B cell (primary cell): ENCODE measurements at regions of chr5 and their contacts with region 1.

Region 1: DNA sequence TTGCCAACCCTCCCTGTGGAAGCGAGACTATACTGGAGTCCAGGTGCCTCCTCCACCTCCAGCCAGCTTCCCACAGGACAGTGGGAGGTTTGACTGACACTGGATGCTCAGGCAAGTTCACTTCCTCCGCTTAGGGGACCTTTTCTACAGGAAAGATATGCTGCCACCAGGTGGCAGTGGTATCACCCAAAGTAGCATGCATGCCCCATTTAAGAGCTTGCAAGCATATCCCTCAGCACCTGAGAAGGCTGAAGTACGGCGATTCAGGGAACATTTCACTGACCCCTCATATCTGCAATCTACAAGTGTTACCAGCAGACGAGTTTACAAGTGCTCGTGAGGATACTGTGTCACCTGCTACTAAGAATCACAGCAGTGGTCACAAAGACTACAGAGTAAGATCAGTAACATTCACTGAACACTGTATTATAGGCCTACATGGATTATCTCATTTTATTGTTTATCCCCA is 75.5 kb downstream of the KLHL3 start:
- DNase-seq: peak; percentile 71
- ATAC-seq: peak; percentile 76
- H3K4me3 ChIP-seq: no peak overlapping the region
- H3K4me3 Mint-ChIP-seq: no peak overlapping the region
- H3K27ac ChIP-seq: no peak overlapping the region
- H3K27ac Mint-ChIP-seq: no peak overlapping the region
- H3K4me1 ChIP-seq: no peaks in the 10 kb centered on the region
- H3K4me1 Mint-ChIP-seq: peaks cover 2% of the 10 kb centered on the region
- H3K27me3 ChIP-seq: no peaks in the 10 kb centered on the region
- H3K27me3 Mint-ChIP-seq: no peaks in the 10 kb centered on the region
- CTCF ChIP-seq: peak; percentile 81

Region 2: GRCh38 chr5:137619191-137619870 is 41.1 kb before region 1 on chr5:
- CTCF ChIA-PET with region 1: no interaction called
- POLR2A ChIA-PET with region 1: no interaction called
- intact Hi-C with region 1: no loop called
- DNase-seq: no peak
- ATAC-seq: no peak
- H3K4me3 ChIP-seq: no peak overlapping the region
- H3K4me3 Mint-ChIP-seq: no peak overlapping the region
- H3K27ac ChIP-seq: no peak overlapping the region
- H3K27ac Mint-ChIP-seq: no peak overlapping the region
- H3K4me1 ChIP-seq: no peaks in the 10 kb centered on the region
- H3K4me1 Mint-ChIP-seq: peaks cover 5% of the 10 kb centered on the region
- H3K27me3 ChIP-seq: no peaks in the 10 kb centered on the region
- H3K27me3 Mint-ChIP-seq: no peaks in the 10 kb centered on the region
- CTCF ChIP-seq: no peak

Region 3: GRCh38 chr5:137629646-137630045 is 30.7 kb before region 1 on chr5:
- CTCF ChIA-PET with region 1: interaction called, 19 read pairs
- POLR2A ChIA-PET with region 1: no interaction called
- intact Hi-C with region 1: no loop called
- DNase-seq: peak; percentile 58
- ATAC-seq: peak; percentile 51
- H3K4me3 ChIP-seq: no peak overlapping the region
- H3K4me3 Mint-ChIP-seq: no peak overlapping the region
- H3K27ac ChIP-seq: no peak overlapping the region
- H3K27ac Mint-ChIP-seq: no peak overlapping the region
- H3K4me1 ChIP-seq: no peaks in the 10 kb centered on the region
- H3K4me1 Mint-ChIP-seq: no peaks in the 10 kb centered on the region
- H3K27me3 ChIP-seq: no peaks in the 10 kb centered on the region
- H3K27me3 Mint-ChIP-seq: no peaks in the 10 kb centered on the region
- CTCF ChIP-seq: peak; percentile 95

Region 4: GRCh38 chr5:137735555-137736284 is 75.3 kb after region 1 on chr5 and contains the start of gene KLHL3:
- CTCF ChIA-PET with region 1: interaction called, 185 read pairs
- POLR2A ChIA-PET with region 1: no interaction called
- intact Hi-C with region 1: no loop called
- DNase-seq: peak; percentile 36
- ATAC-seq: peak; percentile 51
- H3K4me3 ChIP-seq: peak within 1 kb of the TSS; percentile 25 to 60 (median 51)
- H3K4me3 Mint-ChIP-seq: no peak within 1 kb of the TSS
- H3K27ac ChIP-seq: no peak within 1 kb of the TSS
- H3K27ac Mint-ChIP-seq: no peak within 1 kb of the TSS
- H3K4me1 ChIP-seq: peaks cover 22% of the 10 kb centered on the region in 2 donors
- H3K4me1 Mint-ChIP-seq: no peaks in the 10 kb centered on the region
- H3K27me3 ChIP-seq: no peaks in the 10 kb centered on the region
- H3K27me3 Mint-ChIP-seq: peaks cover 3% of the 10 kb centered on the region
- CTCF ChIP-seq: no peak
- total RNA-seq, gene KLHL3: 4.5 and 10.4 TPM in 2 replicates

Region 5: GRCh38 chr5:137743031-137743640 is 82.8 kb after region 1 on chr5:
- CTCF ChIA-PET with region 1: interaction called, 185 read pairs
- POLR2A ChIA-PET with region 1: no interaction called
- intact Hi-C with region 1: loop called (anchors 1 kb)
- DNase-seq: peak; percentile 73
- ATAC-seq: peak; percentile 71
- H3K4me3 ChIP-seq: no peak overlapping the region
- H3K4me3 Mint-ChIP-seq: no peak overlapping the region
- H3K27ac ChIP-seq: no peak overlapping the region
- H3K27ac Mint-ChIP-seq: no peak overlapping the region
- H3K4me1 ChIP-seq: no peaks in the 10 kb centered on the region
- H3K4me1 Mint-ChIP-seq: peaks cover 2% of the 10 kb centered on the region
- H3K27me3 ChIP-seq: no peaks in the 10 kb centered on the region
- H3K27me3 Mint-ChIP-seq: no peaks in the 10 kb centered on the region
- CTCF ChIP-seq: peak; percentile 81

Region 6: GRCh38 chr5:137822158-137822764 is 161.9 kb after region 1 on chr5:
- CTCF ChIA-PET with region 1: interaction called, 3 read pairs
- POLR2A ChIA-PET with region 1: no interaction called
- intact Hi-C with region 1: loop called (anchors 10 kb)
- DNase-seq: peak; percentile 22
- ATAC-seq: no peak
- H3K4me3 ChIP-seq: no peak overlapping the region
- H3K4me3 Mint-ChIP-seq: no peak overlapping the region
- H3K27ac ChIP-seq: no peak overlapping the region
- H3K27ac Mint-ChIP-seq: no peak overlapping the region
- H3K4me1 ChIP-seq: no peaks in the 10 kb centered on the region
- H3K4me1 Mint-ChIP-seq: no peaks in the 10 kb centered on the region
- H3K27me3 ChIP-seq: no peaks in the 10 kb centered on the region
- H3K27me3 Mint-ChIP-seq: no peaks in the 10 kb centered on the region
- CTCF ChIP-seq: peak; percentile 13

Region 7: DNA sequence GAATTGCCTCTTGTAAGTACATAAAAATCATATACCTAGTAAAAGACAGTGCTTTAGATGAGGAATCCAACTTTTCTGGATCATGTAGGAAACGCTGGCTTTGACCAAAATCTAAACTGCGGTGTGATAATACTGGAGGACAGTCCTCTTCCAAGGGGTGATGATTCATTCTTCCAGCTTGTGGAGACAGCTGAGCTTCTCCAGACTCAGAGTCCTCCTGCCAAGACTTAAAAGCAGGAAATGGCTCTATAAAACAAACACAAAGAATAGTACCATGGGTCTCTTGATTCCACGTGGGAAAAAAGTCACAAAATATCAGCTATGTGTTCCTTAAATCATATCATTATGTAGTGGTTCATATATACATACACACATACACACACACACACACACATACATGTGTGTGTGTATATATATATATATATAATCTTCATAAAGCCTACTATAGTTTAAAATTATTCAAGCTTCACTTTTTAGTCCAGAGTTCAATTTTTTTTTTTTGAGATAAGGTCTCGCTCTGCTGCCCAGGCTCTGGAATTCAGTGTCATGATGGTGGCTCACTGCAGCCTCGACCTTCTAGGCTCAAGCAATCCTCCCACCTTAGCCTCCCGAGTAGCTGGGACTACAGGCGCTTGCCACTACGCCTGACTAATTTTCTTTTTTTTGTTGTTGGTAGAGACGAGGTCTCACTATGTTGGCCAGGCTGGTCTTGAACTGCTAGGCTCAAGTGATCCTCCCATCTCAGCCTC is 293.9 kb after region 1 on chr5:
- CTCF ChIA-PET with region 1: no interaction called
- POLR2A ChIA-PET with region 1: no interaction called
- intact Hi-C with region 1: no loop called
- DNase-seq: no peak
- ATAC-seq: no peak
- H3K4me3 ChIP-seq: no peak overlapping the region
- H3K4me3 Mint-ChIP-seq: no peak overlapping the region
- H3K27ac ChIP-seq: no peak overlapping the region
- H3K27ac Mint-ChIP-seq: peak overlapping the region; percentile 20
- H3K4me1 ChIP-seq: no peaks in the 10 kb centered on the region
- H3K4me1 Mint-ChIP-seq: no peaks in the 10 kb centered on the region
- H3K27me3 ChIP-seq: no peaks in the 10 kb centered on the region
- H3K27me3 Mint-ChIP-seq: no peaks in the 10 kb centered on the region
- CTCF ChIP-seq: no peak

Region 8: DNA sequence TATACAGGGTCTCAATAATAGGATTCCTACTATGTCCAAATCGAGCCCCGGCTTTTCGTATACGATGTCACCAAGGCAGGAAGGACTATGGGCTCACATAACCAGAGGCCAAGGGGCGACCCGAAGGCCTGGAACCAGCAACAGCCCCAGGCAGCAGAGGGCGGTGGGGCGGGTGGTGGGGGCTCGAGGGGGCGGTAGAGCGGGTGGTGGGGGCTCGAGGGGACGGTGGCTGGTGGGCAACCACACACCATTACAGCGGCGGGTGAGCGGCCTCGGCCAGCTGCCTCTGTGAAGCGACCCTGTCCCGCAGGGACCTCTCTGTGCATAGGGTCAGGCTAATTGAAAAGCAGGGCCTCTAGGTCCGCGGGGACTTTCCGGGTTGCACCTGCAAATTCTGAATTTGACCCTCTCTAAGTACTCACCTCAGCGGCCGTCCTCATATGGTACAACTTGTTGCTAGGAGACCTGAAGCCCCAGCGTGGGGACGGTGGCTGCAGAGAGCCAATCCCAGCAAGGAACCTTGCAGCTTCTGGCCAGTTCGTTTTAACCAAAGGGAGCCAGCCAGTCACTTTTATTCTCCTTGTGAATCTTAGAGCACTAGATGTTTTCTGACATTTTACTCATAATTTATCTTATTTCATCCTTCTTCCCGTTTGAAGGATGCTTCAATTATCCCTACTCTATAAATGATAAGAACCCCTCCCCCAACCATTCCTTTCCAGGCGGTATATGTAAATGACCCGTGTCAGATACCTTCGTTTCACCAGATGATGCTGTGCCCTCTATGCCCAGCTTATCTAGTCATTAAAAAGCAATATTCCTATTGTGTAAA is 478.8 kb after region 1 on chr5 and contains the start of gene NME5:
- CTCF ChIA-PET with region 1: interaction called, 3 read pairs
- POLR2A ChIA-PET with region 1: no interaction called
- intact Hi-C with region 1: loop called (anchors 10 kb)
- DNase-seq: peak; percentile 33
- ATAC-seq: no peak
- H3K4me3 ChIP-seq: peak within 1 kb of the TSS in 3 of 5 experiments; percentile 21 to 33 (median 23)
- H3K4me3 Mint-ChIP-seq: peak within 1 kb of the TSS; percentile 71
- H3K27ac ChIP-seq: no peak within 1 kb of the TSS
- H3K27ac Mint-ChIP-seq: no peak within 1 kb of the TSS
- H3K4me1 ChIP-seq: peaks cover 5 to 8% of the 10 kb centered on the region in 2 donors
- H3K4me1 Mint-ChIP-seq: peaks cover 9% of the 10 kb centered on the region
- H3K27me3 ChIP-seq: peaks cover 0 to 6% (median 5%) of the 10 kb centered on the region in 4 experiments
- H3K27me3 Mint-ChIP-seq: peaks cover 16% of the 10 kb centered on the region
- CTCF ChIP-seq: no peak
- total RNA-seq, gene NME5: not detected in 2 replicates